ENCODE measurements at regions of chr2 and their contacts with region 1.

Region 1: GRCh38 chr2:55986700-55987440 is 63.3 kb upstream of the EFEMP1 start:
- DNase-seq: no peak
- ATAC-seq: no peak
- H3K4me3 ChIP-seq: no peak overlapping the region
- H3K27ac ChIP-seq: 0 out of 6 replicates have a peak overlapping the region, but pooled peaks of 1 of the 2 experiments have one; percentile 6
- H3K4me1 ChIP-seq: peaks cover 4% of the 10 kb centered on the region
- CTCF ChIP-seq: no peak
- EP300 ChIP-seq: no peak
- POLR2A ChIP-seq: no peak
- RAD21 ChIP-seq: no peak

Region 2: DNA sequence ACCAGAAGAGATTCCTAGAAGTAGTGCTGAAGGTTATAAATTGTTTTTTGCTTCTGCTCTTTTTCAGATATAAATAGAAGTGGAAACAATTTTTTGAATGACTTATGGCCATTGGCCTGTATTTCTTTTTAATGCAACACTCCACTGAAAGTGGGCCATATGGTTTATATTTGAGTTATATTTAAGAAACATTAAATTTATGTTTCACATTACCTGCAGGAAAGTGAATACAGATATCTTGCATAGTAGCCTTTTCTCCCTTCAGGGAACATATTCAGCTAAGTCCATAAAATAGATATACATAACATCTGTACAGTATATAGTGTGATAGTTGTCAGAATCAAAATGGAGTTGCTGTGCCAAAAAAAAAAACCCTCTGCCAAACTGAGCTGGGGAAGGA is 10.2 kb before region 1 on chr2:
- CTCF ChIA-PET with region 1: interaction called, 11 read pairs
- POLR2A ChIA-PET with region 1: no interaction called
- DNase-seq: no peak
- ATAC-seq: no peak
- H3K4me3 ChIP-seq: no peak overlapping the region
- H3K27ac ChIP-seq: no peak overlapping the region
- H3K4me1 ChIP-seq: no peaks in the 10 kb centered on the region
- CTCF ChIP-seq: no peak
- EP300 ChIP-seq: no peak
- POLR2A ChIP-seq: no peak
- RAD21 ChIP-seq: no peak

Region 3: GRCh38 chr2:56068746-56069145 is 81.9 kb after region 1 on chr2:
- CTCF ChIA-PET with region 1: no interaction called
- POLR2A ChIA-PET with region 1: no interaction called
- DNase-seq: no peak
- ATAC-seq: no peak
- H3K4me3 ChIP-seq: no peak overlapping the region
- H3K27ac ChIP-seq: no peak overlapping the region
- H3K4me1 ChIP-seq: no peaks in the 10 kb centered on the region
- CTCF ChIP-seq: no peak
- EP300 ChIP-seq: no peak
- POLR2A ChIP-seq: no peak
- RAD21 ChIP-seq: no peak